Cardiac septum (tissue), 1 donor: ENCODE measurements at regions of chr10 and their contacts with region 1.

Region 1: GRCh38 chr10:102399217-102400089 is 3.9 kb downstream of the NFKB2 start:
- DNase-seq: peak; percentile 96

Region 2: DNA sequence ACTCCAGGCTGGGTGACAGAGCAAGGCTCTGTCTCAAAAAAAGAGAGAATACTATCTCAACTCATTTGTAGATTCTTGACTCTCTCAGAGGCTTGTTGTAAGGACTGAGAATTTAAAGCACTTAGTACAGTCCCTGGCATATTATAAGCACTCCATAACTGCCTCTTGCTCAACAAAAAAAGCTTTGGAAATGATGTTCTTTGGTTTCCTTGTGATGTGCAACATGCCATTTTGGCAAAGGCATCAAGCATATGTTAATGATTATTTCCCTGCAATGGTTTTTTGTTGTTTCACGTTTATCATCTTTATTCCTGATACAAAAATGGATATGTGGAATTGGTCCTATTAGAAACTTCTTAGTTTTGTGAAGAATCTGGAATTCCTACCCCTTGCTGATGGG is 231.6 kb before region 1 on chr10:
- intact Hi-C with region 1: loop called (anchors 5 kb)
- DNase-seq: no peak

Region 3: GRCh38 chr10:102476466-102477141 is 77.2 kb after region 1 on chr10:
- intact Hi-C with region 1: loop called (anchors 5 kb)
- DNase-seq: no peak